Caco-2 (cell line): ENCODE measurements at regions of chr10 and their contacts with region 1.

Region 1: DNA sequence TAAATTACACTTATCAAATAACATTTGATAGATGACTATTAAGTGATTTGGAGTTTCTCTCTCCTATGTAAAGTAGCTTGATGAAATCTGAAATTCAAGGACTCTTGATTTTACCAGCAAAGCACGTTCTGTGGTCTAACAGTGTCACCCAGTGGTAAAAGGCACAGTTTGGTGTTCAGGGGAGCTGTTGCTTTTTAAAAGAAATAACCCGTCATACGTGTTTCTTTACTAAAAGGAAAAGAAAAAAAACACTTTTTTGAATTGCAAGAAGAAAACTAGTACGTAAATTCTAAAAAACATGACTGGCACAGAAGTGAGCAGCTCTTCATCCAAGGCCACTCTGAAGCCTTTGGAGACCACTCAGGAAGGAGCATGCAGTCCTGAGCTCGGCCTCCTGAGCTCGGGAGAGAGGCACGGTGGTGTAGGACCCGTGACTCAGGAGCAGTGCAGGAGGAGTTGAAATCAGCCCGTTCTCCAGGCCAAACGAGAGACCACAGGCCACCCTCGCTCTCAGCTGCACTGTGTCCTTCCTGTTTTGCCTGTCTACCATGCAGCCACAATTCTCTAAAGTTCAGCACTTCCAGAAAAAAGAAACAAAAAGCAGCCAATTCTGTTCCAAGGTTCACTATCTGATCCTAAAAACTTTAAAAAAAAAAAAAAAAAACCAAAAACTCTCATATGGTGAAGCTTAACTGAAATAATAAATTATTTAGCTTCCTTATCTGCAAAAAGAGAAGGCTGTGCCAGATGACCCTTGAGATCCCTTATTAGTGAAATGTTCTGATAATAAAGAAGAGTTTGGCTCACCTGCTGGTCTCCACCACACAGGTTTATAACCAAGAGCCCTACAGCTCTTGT is 212.6 kb upstream of the FRMD4A start:
- DNase-seq: no peak
- H3K4me3 ChIP-seq: no peak overlapping the region
- H3K4me3 Mint-ChIP-seq: no peak overlapping the region
- H3K27ac Mint-ChIP-seq: peak overlapping the region; percentile 59
- H3K4me1 ChIP-seq: peaks cover 42% of the 10 kb centered on the region
- H3K4me1 Mint-ChIP-seq: peaks cover 52% of the 10 kb centered on the region
- H3K27me3 ChIP-seq: no peaks in the 10 kb centered on the region
- H3K27me3 Mint-ChIP-seq: no peaks in the 10 kb centered on the region
- CTCF ChIP-seq: peak in 1 of 2 experiments; percentile 45

Region 2: DNA sequence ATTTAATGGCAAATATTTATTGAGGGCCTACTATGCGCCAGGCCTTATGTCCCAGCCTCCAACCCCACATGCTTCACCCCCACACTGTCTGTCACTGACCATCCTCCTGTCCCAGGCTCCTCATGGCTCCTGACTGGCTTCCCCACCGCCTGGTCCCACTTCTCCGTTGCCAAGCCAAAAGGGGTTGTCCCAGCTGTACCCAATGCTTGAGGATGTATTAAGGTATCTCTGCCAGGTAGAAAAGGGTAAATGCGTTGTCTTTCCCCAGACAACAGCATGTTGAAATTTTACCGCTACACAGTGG is 43.7 kb before region 1 on chr10:
- CTCF ChIA-PET with region 1: interaction called, 4 read pairs
- POLR2A ChIA-PET with region 1: no interaction called
- intact Hi-C with region 1: loop called (anchors 1 kb)
- DNase-seq: no peak
- H3K4me3 ChIP-seq: no peak overlapping the region
- H3K4me3 Mint-ChIP-seq: no peak overlapping the region
- H3K27ac Mint-ChIP-seq: no peak overlapping the region
- H3K4me1 ChIP-seq: no peaks in the 10 kb centered on the region; the same call in 1 of the 2 replicates
- H3K4me1 Mint-ChIP-seq: peaks cover 15% of the 10 kb centered on the region
- H3K27me3 ChIP-seq: no peaks in the 10 kb centered on the region
- H3K27me3 Mint-ChIP-seq: no peaks in the 10 kb centered on the region
- CTCF ChIP-seq: no peak